K562 (cell line): ENCODE measurements at regions of chr18 and their contacts with region 1.

Region 1: DNA sequence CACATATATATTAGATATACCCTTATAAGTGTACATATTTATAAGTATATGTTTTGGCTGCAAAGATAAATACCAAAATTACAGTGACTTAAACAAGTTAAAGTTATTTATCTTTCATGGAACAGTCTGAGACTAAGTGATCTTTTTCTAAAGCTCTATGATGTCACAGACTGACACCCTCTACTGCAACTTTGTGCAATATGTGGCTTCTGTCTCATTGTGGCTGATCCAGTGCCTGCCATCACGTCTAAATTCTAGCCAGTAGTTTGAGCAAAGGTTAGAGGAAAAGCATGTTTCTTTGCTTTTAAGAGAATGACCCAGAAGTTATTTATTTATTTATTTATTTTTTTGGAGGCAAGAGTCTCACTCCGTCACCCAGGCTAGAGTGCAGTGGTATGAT is 13.8 kb upstream of the GATA6 start:
- DNase-seq: no peak
- ATAC-seq: no peak
- H3K4me3 ChIP-seq: no peak overlapping the region
- H3K27ac ChIP-seq: no peak overlapping the region
- H3K4me1 ChIP-seq: no peaks in the 10 kb centered on the region
- H3K27me3 ChIP-seq: peaks cover 17 to 33% of the 10 kb centered on the region in 2 experiments
- CTCF ChIP-seq: no peak
- EP300 ChIP-seq: no peak
- POLR2A ChIP-seq: no peak
- RAD21 ChIP-seq: no peak

Region 2: GRCh38 chr18:22143347-22144340 is 11.9 kb before region 1 on chr18:
- CTCF ChIA-PET with region 1: no interaction called
- POLR2A ChIA-PET with region 1: interaction called, 14 read pairs
- in situ Hi-C with region 1: no loop called
- intact Hi-C with region 1: no loop called
- DNase-seq: no peak
- ATAC-seq: no peak
- H3K4me3 ChIP-seq: no peak overlapping the region
- H3K27ac ChIP-seq: no peak overlapping the region
- H3K4me1 ChIP-seq: no peaks in the 10 kb centered on the region
- H3K27me3 ChIP-seq: peaks cover 13 to 32% of the 10 kb centered on the region in 2 experiments; a peak in 4 of 5 replicates
- CTCF ChIP-seq: no peak
- EP300 ChIP-seq: no peak
- POLR2A ChIP-seq: no peak
- RAD21 ChIP-seq: no peak